Psoas muscle (tissue), 8 donors: ENCODE measurements at regions of chr3 and their contacts with region 1.

Region 1: DNA sequence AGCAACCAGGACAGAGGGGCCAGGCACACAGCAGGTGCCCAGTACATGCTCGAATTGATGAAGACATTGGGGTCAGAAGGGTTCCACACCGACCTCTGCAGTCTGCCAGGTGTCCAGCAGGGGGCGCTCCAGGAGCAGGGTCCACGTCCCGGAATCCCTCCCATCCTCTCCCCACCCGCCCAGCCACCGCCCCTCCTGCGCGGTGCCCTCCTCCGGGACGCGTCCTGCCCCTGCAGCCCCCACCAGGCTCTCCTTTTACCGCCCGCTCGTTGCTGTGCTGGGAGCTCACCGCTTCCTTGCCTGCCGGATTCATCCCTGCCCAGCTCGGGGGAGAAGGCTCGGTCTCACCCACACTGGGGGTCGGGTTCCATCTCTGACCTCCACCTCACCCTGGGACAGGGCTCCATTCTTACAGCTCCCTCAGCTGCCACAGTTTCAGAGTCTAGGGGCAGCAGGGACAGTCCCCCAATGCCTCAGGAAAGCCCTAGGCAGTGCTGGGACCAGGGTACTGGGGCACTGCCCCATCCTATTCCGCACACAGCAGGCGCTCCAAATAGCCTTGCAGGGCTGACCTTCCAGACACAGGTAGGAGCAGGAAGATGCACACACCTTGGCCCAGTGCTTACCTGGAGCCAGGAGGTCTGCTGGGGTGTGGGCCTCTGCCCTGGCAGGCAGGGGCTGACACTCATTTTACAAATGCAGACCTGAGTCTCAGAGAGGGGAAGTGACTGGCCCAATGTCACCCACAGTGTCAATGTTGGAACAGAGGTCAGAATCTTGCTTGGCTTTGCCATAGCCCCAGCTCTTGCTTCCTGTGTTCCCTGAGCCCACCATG is 31.0 kb downstream of the GRIP2 start:
- DNase-seq: peak; percentile 76 to 88
- ATAC-seq: peak; percentile 80 to 91 (median 83)
- H3K4me3 ChIP-seq: no peak overlapping the region
- H3K27ac ChIP-seq: no peak overlapping the region
- H3K4me1 ChIP-seq: peaks cover 4% of the 10 kb centered on the region
- H3K27me3 ChIP-seq: no peaks in the 10 kb centered on the region
- CTCF ChIP-seq: peak; percentile 99

Region 2: GRCh38 chr3:14096745-14097144 is 412.4 kb before region 1 on chr3:
- intact Hi-C with region 1: no loop called
- DNase-seq: no peak
- ATAC-seq: no peak
- H3K4me3 ChIP-seq: no peak overlapping the region
- H3K27ac ChIP-seq: no peak overlapping the region
- H3K4me1 ChIP-seq: no peaks in the 10 kb centered on the region
- H3K27me3 ChIP-seq: peaks cover 0 to 6% (median 0%) of the 10 kb centered on the region in 3 donors
- CTCF ChIP-seq: no peak

Region 3: DNA sequence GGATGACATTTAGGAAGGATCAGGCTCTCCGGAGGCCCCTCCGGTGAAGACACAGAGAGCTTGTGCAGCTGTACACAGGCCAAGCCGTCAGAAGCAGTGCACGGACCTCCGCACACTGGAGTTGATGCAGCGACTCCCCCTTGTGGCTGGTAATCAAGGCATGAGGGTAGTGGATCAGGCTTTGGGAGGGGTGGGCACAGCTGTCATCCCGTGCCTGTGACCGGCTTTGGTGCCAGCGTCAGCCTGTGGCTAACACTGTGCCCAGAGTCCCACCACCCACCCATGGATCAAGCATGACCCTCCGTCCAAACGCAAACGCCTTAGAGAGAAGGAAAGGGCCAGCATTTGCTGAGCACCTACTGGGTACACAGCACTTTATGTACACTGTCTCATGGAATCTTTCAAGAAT is 39.1 kb after region 1 on chr3:
- intact Hi-C with region 1: loop called (anchors 1 kb)
- DNase-seq: peak; percentile 75 to 88
- ATAC-seq: peak; percentile 90 to 94 (median 92)
- H3K4me3 ChIP-seq: no peak overlapping the region
- H3K27ac ChIP-seq: peak overlapping the region; percentile 32
- H3K4me1 ChIP-seq: peaks cover 9% of the 10 kb centered on the region
- H3K27me3 ChIP-seq: no peaks in the 10 kb centered on the region
- CTCF ChIP-seq: peak; percentile 78

Region 4: DNA sequence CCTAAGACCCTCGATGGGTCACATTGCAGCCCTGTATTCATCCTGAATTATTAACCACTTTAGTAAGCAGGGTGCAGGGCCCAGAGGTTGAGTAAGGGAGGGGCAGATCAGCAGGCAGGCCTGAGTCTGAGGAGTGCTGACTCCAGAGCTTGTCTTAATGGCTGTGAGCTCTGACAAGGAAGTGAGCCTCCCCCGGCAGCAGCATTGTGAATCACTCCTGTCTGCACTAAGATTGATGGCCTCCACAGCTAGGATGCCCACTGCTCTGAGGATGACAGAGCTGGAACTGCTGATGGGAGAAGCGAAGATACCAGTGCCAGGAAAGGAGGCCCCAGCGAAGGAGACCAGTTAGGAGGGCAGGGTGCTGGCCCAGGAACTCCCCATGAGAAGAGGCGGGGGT is 95.9 kb after region 1 on chr3:
- intact Hi-C with region 1: loop called in 1 of 2 experiments (anchors 5 kb)
- DNase-seq: no peak
- ATAC-seq: no peak
- H3K4me3 ChIP-seq: no peak overlapping the region
- H3K27ac ChIP-seq: no peak overlapping the region
- H3K4me1 ChIP-seq: peaks cover 4% of the 10 kb centered on the region
- H3K27me3 ChIP-seq: peaks cover 0 to 32% (median 12%) of the 10 kb centered on the region in 3 donors
- CTCF ChIP-seq: no peak

Region 5: DNA sequence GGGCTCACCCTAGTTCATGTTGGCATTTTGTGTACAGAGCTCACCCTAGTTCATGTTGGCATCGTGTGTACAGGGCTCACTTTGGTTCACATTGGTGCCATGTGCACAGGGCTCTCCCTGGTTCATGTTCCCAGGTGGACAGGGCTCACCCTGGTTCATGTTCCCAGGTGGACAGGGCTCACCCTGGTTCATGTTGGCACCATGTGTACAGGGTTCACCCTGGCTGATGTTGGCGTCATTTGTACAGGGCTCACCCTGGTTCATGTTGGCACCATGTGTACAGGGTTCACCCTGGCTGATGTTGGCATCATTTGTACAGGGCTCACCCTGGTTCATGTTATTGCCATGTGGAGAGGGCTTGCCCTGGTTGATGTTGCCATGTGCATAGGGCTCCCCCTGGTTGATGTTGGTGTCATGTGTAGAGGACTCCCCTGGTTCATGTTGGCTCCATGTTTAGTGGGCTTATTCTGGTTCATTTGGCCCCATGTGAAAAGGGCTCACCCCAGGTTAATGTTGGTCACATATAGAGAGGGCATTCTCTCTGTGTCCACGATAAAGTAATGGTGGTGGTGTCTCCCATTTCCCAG is 406.6 kb after region 1 on chr3:
- intact Hi-C with region 1: loop called in 1 of 2 experiments (anchors 5 kb)
- DNase-seq: no peak
- ATAC-seq: peak in 1 of 4 donors; percentile 57
- H3K4me3 ChIP-seq: no peak overlapping the region
- H3K27ac ChIP-seq: no peak overlapping the region
- H3K4me1 ChIP-seq: no peaks in the 10 kb centered on the region
- H3K27me3 ChIP-seq: no peaks in the 10 kb centered on the region
- CTCF ChIP-seq: peak; percentile 6